CD14-positive monocyte (primary cell): ENCODE measurements at regions of chr5 and their contacts with region 1.

Region 1: DNA sequence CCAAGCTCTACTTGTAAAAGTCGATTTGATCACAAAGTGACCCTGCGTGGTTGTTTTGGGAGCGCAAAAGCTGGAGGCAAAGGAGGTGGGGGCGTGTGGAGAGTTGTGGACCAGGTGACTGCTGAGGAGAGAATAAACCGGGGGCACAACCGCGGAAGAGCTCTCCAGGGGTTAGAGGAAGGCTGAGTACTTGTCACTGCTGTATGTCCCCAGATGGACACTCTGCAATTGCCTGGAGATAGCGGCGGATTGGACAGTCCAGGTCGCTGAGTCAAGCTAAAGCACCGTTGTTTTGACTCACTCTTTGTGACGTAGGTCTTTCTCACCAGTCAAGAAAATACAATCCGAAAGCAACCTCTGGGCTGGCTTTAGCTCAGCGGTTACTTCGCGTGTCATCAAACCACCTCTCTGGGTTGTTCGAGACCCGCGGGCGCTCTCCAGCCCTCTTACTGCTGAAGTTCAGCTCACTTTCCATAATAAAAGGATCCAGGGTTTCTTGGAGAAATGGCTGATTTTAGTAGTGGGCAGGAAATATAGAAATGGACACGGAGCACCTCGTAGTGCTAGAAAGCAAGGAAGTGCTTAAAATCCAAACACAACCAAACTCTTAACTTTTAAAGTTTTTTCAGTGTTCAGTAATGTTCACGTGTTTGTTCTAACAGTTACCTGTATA is 25.7 kb downstream of the ZMAT2 start:
- DNase-seq: peak; percentile 63 to 81 (median 67)
- H3K4me3 ChIP-seq: peak overlapping the region in 1 of 3 experiments; percentile 20
- H3K4me3 Mint-ChIP-seq: peak overlapping the region; percentile 54 to 76
- H3K27ac ChIP-seq: no peak overlapping the region
- H3K27ac Mint-ChIP-seq: peak overlapping the region in 2 of 7 donors; percentile 6 to 79
- H3K4me1 ChIP-seq: no peaks in the 10 kb centered on the region
- H3K4me1 Mint-ChIP-seq: peaks cover 9% of the 10 kb centered on the region
- H3K27me3 ChIP-seq: peaks cover 5 to 36% of the 10 kb centered on the region in 2 donors
- H3K27me3 Mint-ChIP-seq: peaks cover 29 to 56% (median 42%) of the 10 kb centered on the region in 3 donors
- CTCF ChIP-seq: no peak

Region 2: DNA sequence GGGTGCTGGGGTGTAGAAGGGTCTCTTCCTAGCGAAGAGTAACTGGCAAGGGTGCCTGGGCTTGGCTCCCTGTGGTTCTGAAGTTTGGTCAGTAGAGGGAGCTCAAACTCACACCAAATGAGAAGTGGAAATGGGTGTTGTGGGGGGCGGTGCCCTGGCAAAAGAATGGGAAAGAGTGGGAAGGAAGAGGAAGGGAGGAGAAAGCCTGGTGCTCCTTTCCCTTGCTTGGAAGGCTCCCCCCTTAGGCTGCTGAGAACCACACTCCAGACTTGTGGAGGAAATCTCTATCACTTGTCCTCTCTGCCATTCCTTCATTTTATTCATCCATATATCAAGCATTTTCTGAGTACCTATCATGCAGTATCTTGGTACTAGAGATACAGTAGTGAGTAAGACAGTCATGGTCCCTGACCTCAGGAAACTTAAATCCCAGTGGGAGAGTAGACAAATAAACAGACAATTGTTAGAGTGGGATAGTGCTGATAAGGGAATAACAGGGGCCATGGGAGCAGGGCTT is 352.9 kb before region 1 on chr5:
- intact Hi-C with region 1: loop called in 1 of 2 experiments (anchors 10 kb)
- DNase-seq: peak; percentile 16 to 51 (median 38)
- H3K4me3 ChIP-seq: no peak overlapping the region
- H3K4me3 Mint-ChIP-seq: no peak overlapping the region
- H3K27ac ChIP-seq: no peak overlapping the region
- H3K27ac Mint-ChIP-seq: peak overlapping the region in 2 of 7 donors; percentile 41 to 54
- H3K4me1 ChIP-seq: peaks cover 0 to 6% of the 10 kb centered on the region in 2 donors
- H3K4me1 Mint-ChIP-seq: peaks cover 7% of the 10 kb centered on the region
- H3K27me3 ChIP-seq: no peaks in the 10 kb centered on the region
- H3K27me3 Mint-ChIP-seq: peaks cover 0 to 2% (median 2%) of the 10 kb centered on the region in 3 donors
- CTCF ChIP-seq: peak; percentile 91

Region 3: DNA sequence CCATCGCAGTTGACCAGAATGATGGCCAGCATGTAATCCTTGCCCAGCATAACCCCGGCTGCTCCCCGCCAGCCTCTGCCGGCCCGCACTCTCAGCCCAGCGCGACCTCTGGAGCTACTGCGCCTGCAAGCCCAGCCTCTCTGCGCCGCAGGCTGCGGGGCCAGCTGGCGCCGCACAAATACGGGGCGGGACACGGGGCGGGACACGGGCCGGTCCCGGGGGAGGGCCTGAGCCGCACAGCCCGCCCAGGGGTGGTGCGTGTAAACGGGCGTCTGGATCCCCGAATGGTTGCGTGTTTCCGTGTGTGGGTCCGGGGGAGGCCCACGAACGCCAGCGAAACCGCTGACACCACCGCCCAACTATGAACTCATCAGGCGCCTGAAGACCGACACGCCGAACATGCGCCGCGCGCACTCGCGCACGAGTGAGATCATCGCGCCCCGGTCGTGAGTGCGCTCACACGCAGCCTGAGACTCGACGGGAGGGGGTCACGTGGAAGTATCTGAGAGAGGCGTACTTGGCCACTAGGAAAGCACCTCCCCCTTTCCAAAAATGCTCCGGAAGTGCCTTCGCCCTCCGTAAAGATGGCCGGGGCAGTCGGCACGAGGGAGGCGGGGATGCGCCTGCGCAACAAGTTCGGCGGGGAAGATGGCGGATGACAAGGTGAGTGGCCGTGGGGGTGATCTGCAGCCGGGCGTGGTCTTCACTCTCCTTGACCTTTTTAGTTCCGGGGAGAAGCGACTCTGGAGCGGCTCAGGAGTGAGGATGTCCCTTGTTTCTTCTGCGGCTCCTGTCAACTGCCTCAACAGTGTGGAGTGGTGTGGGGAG is 161.5 kb before region 1 on chr5 and contains the starts of genes APBB3 and SLC35A4:
- intact Hi-C with region 1: no loop called
- DNase-seq: peak; percentile 99 to 100 (median 100)
- H3K4me3 ChIP-seq: peak within 1 kb of the TSS; percentile 77 to 87 (median 83)
- H3K4me3 Mint-ChIP-seq: peak within 1 kb of the TSS; percentile 91 to 98
- H3K27ac ChIP-seq: peak within 1 kb of the TSS; percentile 92
- H3K27ac Mint-ChIP-seq: peak within 1 kb of the TSS; percentile 97 to 99 (median 98)
- H3K4me1 ChIP-seq: peaks cover 33 to 65% of the 10 kb centered on the region in 2 donors
- H3K4me1 Mint-ChIP-seq: peaks cover 58% of the 10 kb centered on the region
- H3K27me3 ChIP-seq: no peaks in the 10 kb centered on the region
- H3K27me3 Mint-ChIP-seq: peaks cover 0 to 2% (median 2%) of the 10 kb centered on the region in 3 donors
- CTCF ChIP-seq: no peak
- polyA plus RNA-seq, gene APBB3: 4.9 to 211 (median 7.4) TPM
- polyA plus RNA-seq, gene SLC35A4: 44.0 to 67.1 (median 58.8) TPM